Right ventricle myocardium superior (tissue), 1 donor: ENCODE measurements at regions of chr1 and their contacts with region 1.

Region 1: GRCh38 chr1:229620876-229621275 is 5.0 kb downstream of the TAF5L start:
- DNase-seq: no peak
- ATAC-seq: peak; percentile 34

Region 2: DNA sequence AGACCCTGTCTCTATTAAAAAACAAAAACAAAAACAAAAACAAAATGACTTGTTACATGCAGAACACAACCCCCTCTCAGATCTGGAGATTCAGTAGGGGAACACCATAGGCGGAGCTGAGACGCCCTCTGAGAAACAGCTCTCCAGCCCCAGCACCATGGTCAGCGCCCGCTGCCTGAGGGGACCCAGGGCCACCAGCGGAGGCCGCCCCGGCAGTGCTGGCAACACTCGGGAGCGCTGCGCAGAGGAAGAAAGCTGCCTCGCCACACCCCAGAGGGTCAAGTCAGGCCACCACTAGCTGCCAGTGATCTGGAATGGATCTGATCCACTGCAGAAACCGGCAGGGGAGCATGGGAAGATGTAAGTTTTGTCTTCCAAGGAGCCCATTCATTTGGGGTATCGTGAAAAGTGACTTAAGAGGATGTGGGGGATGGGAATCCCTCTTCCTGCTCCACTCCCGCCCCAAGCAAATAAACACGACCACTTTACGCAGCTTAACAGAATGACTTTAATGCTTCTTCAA is 190.1 kb before region 1 on chr1:
- intact Hi-C with region 1: no loop called
- DNase-seq: peak; percentile 85
- ATAC-seq: peak; percentile 83

Region 3: GRCh38 chr1:229558571-229559335 is 62.1 kb before region 1 on chr1 and contains the start of gene ABCB10:
- intact Hi-C with region 1: loop called (anchors 5 kb)
- DNase-seq: peak; percentile 98
- ATAC-seq: peak; percentile 95
- total RNA-seq, gene ABCB10: 11.3 TPM

Region 4: DNA sequence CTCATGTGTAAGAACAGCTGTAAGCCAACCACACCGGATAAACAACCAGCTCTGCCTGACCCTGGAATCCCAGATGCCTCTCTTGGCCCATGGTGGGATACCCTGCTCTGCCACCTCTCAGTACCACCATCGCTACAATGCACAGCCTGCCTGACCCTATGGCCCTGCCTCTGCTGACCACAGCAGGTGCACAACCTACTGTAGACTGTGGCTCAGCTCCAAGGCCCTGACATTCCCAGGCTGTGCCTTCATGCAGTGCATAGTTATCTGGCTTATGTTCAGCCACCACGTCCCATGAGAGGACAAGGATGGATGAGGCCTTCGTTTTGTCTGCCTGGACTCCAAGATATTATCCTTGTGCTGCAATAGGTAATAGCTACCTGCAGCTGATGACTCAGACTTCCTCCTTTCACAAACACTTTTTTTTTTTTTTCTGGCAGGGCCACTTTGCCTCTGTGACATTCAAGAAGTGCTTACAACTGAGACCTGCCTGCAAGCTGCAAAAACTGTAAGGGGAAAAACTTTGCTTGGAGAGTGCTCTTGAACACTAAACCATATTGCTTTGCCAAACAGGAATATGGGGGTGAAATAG is 182.8 kb after region 1 on chr1:
- intact Hi-C with region 1: no loop called
- DNase-seq: no peak
- ATAC-seq: no peak